A673 (cell line): ENCODE measurements at regions of chr17 and their contacts with region 1.

Region 1: GRCh38 chr17:32997753-32998632 is 6.3 kb downstream of the SPACA3 start:
- DNase-seq: peak; percentile 69
- H3K4me3 ChIP-seq: peak overlapping the region; percentile 19
- H3K27ac ChIP-seq: no peak overlapping the region
- H3K4me1 ChIP-seq: peaks cover 5% of the 10 kb centered on the region
- H3K27me3 ChIP-seq: no peaks in the 10 kb centered on the region
- CTCF ChIP-seq: peak; percentile 81

Region 2: DNA sequence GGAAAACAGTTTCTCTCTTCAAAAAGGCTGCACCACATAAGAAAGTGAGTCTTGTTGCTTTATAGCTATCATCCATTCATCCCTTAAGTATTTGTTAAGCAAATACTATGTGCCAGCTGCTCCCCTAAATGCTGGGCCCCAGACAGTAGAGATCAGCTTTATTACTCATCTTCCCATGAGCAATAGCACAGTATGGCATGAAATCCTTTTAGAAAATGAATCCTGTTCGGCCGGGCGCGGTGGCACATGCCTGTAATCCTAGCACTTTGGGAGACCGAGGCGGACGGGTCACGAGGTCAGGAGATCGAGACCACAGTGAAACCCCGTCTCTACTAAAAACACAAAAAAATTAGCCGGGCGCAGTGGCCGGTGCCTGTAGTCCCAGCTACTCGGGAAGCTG is 220.6 kb before region 1 on chr17:
- CTCF ChIA-PET with region 1: no interaction called
- POLR2A ChIA-PET with region 1: no interaction called
- intact Hi-C with region 1: loop called (anchors 5 kb)
- DNase-seq: no peak
- H3K4me3 ChIP-seq: no peak overlapping the region
- H3K27ac ChIP-seq: no peak overlapping the region
- H3K4me1 ChIP-seq: no peaks in the 10 kb centered on the region
- H3K27me3 ChIP-seq: no peaks in the 10 kb centered on the region
- CTCF ChIP-seq: no peak